ENCODE measurements at regions of chr11 and their contacts with region 1.

Region 1: DNA sequence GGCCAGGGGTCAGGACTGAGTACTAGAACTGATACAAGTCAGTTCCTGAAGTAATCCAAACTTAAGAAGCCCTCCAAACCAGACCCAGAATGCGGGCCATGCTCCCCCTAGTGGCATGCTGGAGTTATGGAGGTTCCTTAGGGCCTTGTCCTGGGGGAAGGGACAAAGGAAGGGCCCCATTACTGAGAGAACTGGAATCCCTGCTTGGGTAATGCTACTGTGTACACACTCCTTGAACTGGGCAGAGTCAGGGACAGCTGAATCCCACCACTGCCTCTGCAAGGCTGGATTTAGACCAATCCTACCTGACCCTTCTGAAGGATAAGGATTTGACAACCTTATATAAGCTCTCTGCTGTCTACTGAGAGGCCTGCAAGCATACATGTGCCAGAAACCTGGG is 97.3 kb upstream of the AKIP1 start:
- DNase-seq: peak; percentile 70
- H3K4me3 ChIP-seq: no peak overlapping the region
- H3K27ac ChIP-seq: no peak overlapping the region
- H3K4me1 ChIP-seq: peaks cover 12% of the 10 kb centered on the region
- CTCF ChIP-seq: peak; percentile 91

Region 2: DNA sequence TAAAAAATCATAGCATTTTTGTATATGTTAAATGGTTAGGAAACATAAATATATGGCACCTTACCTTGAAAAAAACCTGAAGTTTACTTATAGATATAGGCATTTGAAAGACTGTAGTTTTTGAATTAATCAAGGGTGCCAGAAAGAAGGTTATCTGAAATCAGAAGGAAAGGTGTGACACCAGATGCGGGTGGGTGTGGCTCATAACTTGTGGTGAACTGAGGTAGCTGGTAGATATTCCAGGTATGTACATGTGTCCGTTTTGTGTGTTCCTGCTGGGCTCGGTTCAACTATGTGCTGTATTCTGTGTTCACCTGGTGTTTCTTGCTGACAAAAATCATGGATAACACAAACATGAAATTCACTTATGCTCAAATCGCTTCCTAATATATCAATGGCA is 255.2 kb before region 1 on chr11:
- CTCF ChIA-PET with region 1: no interaction called
- POLR2A ChIA-PET with region 1: no interaction called
- intact Hi-C with region 1: no loop called
- DNase-seq: no peak
- H3K4me3 ChIP-seq: no peak overlapping the region
- H3K27ac ChIP-seq: no peak overlapping the region
- H3K4me1 ChIP-seq: no peaks in the 10 kb centered on the region
- CTCF ChIP-seq: no peak

Region 3: GRCh38 chr11:8577791-8578581 is 235.7 kb before region 1 on chr11:
- CTCF ChIA-PET with region 1: no interaction called
- POLR2A ChIA-PET with region 1: no interaction called
- intact Hi-C with region 1: loop called (anchors 10 kb)
- DNase-seq: no peak
- H3K4me3 ChIP-seq: no peak overlapping the region
- H3K27ac ChIP-seq: no peak overlapping the region
- H3K4me1 ChIP-seq: no peaks in the 10 kb centered on the region
- CTCF ChIP-seq: no peak

Region 4: DNA sequence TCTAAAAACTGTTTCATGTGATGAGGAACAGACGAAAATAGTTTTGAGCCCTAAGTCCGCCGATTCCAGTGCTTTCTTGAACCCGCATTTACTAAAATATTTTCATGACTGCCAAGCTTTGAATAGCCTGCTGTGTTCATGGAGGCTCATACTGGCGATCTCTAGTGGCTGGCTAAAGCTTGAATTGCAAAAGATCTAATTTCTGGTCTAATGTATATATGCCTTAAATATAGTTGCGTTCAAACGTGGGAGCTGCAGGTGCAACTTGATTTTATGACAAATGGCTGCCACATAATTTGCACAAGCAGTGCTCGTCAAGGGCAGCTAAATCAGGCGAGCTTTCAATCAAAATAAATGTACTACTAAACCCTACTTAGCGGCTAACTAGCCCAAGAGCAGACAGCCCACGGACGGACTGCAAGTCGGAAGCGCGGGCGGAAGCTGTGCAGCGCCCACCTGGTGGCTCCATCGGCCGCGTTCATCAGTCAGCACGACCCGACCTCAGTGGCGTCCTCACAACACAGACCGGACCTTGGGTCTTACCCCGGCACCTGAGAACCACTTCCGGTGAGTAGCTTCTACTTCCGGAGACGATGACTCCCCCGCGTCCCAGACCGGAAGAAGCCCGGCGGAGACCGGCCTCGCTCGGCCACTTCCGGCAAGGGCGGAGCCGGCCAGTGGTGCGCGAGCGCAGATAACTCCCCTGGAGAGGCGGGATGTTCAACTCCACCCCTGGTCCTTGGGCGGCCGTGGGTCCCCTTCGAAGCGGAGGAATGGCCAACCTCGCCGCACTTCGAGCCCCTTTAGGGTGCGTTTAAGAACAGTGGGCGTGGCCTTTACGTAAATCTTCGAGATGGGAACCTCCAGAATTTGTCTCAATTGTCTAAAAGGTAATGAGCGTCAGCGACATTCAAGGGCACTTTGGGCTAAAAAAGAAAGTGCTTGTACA is 125.0 kb before region 1 on chr11:
- CTCF ChIA-PET with region 1: no interaction called
- POLR2A ChIA-PET with region 1: no interaction called
- intact Hi-C with region 1: loop called (anchors 2 kb)
- DNase-seq: peak; percentile 98
- H3K4me3 ChIP-seq: peak overlapping the region; percentile 88
- H3K27ac ChIP-seq: peak overlapping the region; percentile 93
- H3K4me1 ChIP-seq: peaks cover 53% of the 10 kb centered on the region
- CTCF ChIP-seq: peak; percentile 42

Measured in OCI-LY7 (cell line).